Activated CD8-positive, alpha-beta memory T cell treated with anti-CD3 and anti-CD28 coated beads, Interleukin-2, amount 10 ng/mL, durations not matched to agents 7 days and 5 days (primary cell): ENCODE measurements at regions of chr12 and their contacts with region 1.

Region 1: GRCh38 chr12:107317751-107318613 is 224.6 kb upstream of the CRY1 start:
- DNase-seq: peak; percentile 93
- ATAC-seq: peak; percentile 80
- H3K4me3 Mint-ChIP-seq: peak overlapping the region; percentile 79
- H3K27ac Mint-ChIP-seq: no peak overlapping the region
- H3K4me1 Mint-ChIP-seq: peaks cover 33% of the 10 kb centered on the region
- H3K27me3 Mint-ChIP-seq: peaks cover 54% of the 10 kb centered on the region

Region 2: GRCh38 chr12:106924268-106924861 is 393.6 kb before region 1 on chr12:
- CTCF ChIA-PET with region 1: no interaction called
- DNase-seq: no peak
- ATAC-seq: no peak
- H3K4me3 Mint-ChIP-seq: no peak overlapping the region
- H3K27ac Mint-ChIP-seq: no peak overlapping the region
- H3K4me1 Mint-ChIP-seq: no peaks in the 10 kb centered on the region
- H3K27me3 Mint-ChIP-seq: peaks cover 37% of the 10 kb centered on the region

Region 3: DNA sequence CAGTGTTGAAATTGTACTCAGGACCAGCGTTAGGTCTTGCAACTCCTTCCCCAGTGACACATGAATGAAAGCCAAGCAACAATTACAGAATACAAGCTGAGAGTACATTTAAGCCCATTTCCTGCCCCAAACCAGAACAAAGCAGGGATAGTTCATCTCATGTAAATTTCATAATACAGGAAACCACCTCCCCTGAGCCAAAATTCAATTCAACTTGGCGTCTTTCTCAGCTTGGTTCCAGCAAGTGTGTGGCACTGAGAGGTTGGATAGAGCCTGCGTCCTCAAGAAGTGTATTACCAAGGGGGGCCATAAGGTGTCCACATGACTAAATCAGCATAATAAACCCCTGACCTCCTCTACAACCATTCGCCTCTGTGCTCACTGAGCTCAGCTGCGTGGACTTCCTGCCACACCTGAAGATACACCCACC is 54.3 kb after region 1 on chr12:
- CTCF ChIA-PET with region 1: interaction called, 20 read pairs
- DNase-seq: peak; percentile 63
- ATAC-seq: peak; percentile 40
- H3K4me3 Mint-ChIP-seq: peak overlapping the region; percentile 9
- H3K27ac Mint-ChIP-seq: peak overlapping the region; percentile 69
- H3K4me1 Mint-ChIP-seq: peaks cover 67% of the 10 kb centered on the region
- H3K27me3 Mint-ChIP-seq: no peaks in the 10 kb centered on the region

Region 4: DNA sequence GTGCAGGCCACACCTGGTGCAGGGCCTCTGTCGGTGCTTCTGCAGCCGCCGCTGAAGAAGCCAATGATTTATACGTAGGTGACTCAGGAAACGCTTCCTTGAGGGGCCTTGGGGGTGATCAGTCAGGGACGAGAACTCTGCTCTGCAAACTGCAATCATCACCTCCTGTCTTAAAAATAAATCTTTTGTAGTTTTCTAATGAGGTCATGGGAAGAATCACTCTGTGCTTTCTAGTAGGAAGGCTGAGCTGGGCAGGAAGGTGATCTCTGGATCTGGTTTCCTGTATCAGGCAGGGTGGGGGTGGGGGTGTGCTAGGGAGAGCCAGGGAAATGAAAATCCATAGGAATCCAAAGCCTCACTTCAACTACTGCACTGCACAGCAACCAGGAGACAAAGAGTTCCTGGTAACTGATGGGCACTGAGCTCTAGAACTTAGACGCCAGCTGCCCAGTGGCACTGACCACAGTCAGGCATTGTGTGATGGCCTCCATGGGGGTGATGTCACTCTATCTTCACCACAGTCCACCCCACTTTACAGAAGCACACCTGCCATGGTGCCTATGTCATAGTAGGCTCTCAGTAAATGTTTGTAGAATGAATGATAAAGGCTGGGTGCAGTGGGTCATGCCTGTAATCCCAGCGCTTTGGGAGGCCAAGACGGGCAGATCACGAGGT is 75.2 kb after region 1 on chr12:
- CTCF ChIA-PET with region 1: no interaction called
- DNase-seq: no peak
- ATAC-seq: no peak
- H3K4me3 Mint-ChIP-seq: no peak overlapping the region
- H3K27ac Mint-ChIP-seq: no peak overlapping the region
- H3K4me1 Mint-ChIP-seq: peaks cover 23% of the 10 kb centered on the region
- H3K27me3 Mint-ChIP-seq: no peaks in the 10 kb centered on the region